ENCODE measurements at regions of chr11 and their contacts with region 1.

Region 1: DNA sequence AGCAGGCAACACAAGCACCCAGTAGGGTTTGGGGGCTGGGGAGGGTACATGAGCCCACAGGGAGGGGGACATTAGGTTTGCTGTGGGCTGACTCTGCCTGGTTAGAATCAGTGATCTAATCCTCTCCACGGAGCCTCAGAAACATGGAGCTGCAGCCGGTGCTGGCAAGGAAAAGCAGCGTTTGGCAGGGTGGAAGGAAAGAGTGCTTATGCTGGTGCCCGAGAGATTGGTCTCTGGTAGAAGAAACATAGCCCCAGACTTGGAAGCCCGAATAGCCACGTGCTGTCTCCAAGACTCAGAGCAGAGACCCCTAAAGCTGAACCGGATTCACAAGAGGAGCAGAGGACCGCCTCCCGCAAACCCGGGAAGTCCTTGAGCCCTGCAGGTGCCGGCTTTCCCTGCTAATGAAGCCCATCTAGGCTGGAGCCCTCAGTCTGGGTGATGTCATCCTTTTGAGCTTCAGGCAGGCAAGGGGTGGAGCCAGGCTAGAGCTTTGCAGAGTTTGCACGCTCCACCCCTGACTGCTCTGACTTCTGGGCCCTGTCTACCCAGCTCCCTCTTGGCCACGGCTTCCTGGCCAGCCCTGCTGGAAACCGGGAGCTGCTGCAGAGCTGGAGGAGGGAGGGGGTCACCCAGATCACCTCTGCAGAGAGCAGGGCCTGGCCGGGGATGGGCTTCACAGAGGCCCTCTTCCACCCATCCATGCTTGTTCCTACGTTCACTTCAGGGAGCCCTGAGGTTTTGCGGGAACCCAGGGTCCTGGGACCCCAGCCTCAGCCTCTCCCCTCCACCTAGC is 35.0 kb upstream of the JAM3 start:
- DNase-seq: peak; percentile 83
- ATAC-seq: peak; percentile 87
- H3K4me3 Mint-ChIP-seq: peak overlapping the region; percentile 50
- H3K27ac Mint-ChIP-seq: peak overlapping the region; percentile 88
- H3K4me1 Mint-ChIP-seq: peaks cover 57% of the 10 kb centered on the region
- H3K27me3 Mint-ChIP-seq: peaks cover 23% of the 10 kb centered on the region
- CTCF ChIP-seq: no peak

Region 2: GRCh38 chr11:133947321-133947756 is 86.6 kb before region 1 on chr11:
- CTCF ChIA-PET with region 1: interaction called, 21 read pairs
- POLR2A ChIA-PET with region 1: no interaction called
- DNase-seq: peak; percentile 76
- ATAC-seq: peak; percentile 65
- H3K4me3 Mint-ChIP-seq: no peak overlapping the region
- H3K27ac Mint-ChIP-seq: no peak overlapping the region
- H3K4me1 Mint-ChIP-seq: peaks cover 59% of the 10 kb centered on the region
- H3K27me3 Mint-ChIP-seq: no peaks in the 10 kb centered on the region
- CTCF ChIP-seq: no peak

Region 3: GRCh38 chr11:134019500-134019899 is 14.4 kb before region 1 on chr11:
- CTCF ChIA-PET with region 1: interaction called, 65 read pairs
- POLR2A ChIA-PET with region 1: interaction called, 3 read pairs
- DNase-seq: no peak
- ATAC-seq: 0 out of 2 replicates have a peak, but pooled peaks have one; percentile 22
- H3K4me3 Mint-ChIP-seq: no peak overlapping the region
- H3K27ac Mint-ChIP-seq: no peak overlapping the region
- H3K4me1 Mint-ChIP-seq: peaks cover 17% of the 10 kb centered on the region
- H3K27me3 Mint-ChIP-seq: peaks cover 10% of the 10 kb centered on the region
- CTCF ChIP-seq: no peak

Region 4: GRCh38 chr11:134110252-134110815 is 76.4 kb after region 1 on chr11:
- CTCF ChIA-PET with region 1: no interaction called
- POLR2A ChIA-PET with region 1: no interaction called
- DNase-seq: no peak
- ATAC-seq: no peak
- H3K4me3 Mint-ChIP-seq: no peak overlapping the region
- H3K27ac Mint-ChIP-seq: no peak overlapping the region
- H3K4me1 Mint-ChIP-seq: peaks cover 20% of the 10 kb centered on the region
- H3K27me3 Mint-ChIP-seq: no peaks in the 10 kb centered on the region
- CTCF ChIP-seq: no peak

Measured in WTC11 (cell line).